Activated CD4-positive, alpha-beta memory T cell treated with anti-CD3 and anti-CD28 coated beads, Interleukin-2, amount 10 ng/mL, durations not matched to agents 7 days and 5 days (primary cell): ENCODE measurements at regions of chr11 and their contacts with region 1.

Region 1: DNA sequence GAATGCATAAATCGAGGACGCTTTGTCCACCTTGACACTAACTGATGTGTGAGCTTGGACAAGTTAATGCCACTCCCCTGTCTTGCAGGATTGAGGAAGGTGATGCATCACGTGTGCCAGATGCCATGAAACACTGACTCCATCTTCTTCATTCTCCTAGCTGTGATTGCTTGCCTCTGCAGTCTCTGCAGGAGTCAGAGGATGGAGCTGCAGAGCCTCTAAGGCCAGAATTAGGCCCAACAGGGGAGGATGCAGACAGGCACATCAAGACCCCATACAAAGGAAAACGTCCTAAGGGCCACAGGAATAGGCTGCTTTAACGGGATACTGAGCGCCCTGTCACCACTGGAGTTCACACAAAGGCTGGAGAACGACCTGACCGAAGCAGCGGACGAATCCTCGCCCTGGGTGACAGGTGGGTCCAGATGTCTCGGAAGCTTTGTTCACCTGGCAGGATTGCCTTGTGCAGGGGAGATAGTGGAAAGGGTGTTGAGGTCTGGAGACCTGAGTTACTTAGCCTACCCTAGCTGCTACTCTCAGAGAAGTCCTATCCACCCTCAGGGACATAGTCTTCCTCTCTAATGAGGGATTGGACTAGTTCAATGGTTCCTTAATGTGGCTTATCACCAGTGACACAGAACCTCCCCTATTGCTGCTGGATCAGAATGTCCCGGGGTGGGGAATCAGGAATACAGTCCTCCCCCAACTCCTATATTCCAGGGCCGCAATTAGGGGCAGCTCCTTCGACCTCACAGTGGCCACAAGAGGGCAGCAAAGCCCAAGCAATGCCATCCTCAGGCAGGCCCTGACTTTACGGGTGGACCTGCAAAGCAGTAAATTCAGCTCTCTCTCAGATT is 32.4 kb downstream of the DBX1 start:
- DNase-seq: peak; percentile 75
- H3K4me3 Mint-ChIP-seq: no peak overlapping the region
- H3K27ac Mint-ChIP-seq: no peak overlapping the region
- H3K4me1 Mint-ChIP-seq: peaks cover 11% of the 10 kb centered on the region
- H3K27me3 Mint-ChIP-seq: peaks cover 18% of the 10 kb centered on the region

Region 2: GRCh38 chr11:19951558-19952115 is 176.3 kb before region 1 on chr11:
- CTCF ChIA-PET with region 1: interaction called, 16 read pairs
- POLR2A ChIA-PET with region 1: no interaction called
- DNase-seq: no peak
- H3K4me3 Mint-ChIP-seq: peak overlapping the region; percentile 6
- H3K27ac Mint-ChIP-seq: no peak overlapping the region
- H3K4me1 Mint-ChIP-seq: peaks cover 8% of the 10 kb centered on the region
- H3K27me3 Mint-ChIP-seq: peaks cover 25% of the 10 kb centered on the region

Region 3: DNA sequence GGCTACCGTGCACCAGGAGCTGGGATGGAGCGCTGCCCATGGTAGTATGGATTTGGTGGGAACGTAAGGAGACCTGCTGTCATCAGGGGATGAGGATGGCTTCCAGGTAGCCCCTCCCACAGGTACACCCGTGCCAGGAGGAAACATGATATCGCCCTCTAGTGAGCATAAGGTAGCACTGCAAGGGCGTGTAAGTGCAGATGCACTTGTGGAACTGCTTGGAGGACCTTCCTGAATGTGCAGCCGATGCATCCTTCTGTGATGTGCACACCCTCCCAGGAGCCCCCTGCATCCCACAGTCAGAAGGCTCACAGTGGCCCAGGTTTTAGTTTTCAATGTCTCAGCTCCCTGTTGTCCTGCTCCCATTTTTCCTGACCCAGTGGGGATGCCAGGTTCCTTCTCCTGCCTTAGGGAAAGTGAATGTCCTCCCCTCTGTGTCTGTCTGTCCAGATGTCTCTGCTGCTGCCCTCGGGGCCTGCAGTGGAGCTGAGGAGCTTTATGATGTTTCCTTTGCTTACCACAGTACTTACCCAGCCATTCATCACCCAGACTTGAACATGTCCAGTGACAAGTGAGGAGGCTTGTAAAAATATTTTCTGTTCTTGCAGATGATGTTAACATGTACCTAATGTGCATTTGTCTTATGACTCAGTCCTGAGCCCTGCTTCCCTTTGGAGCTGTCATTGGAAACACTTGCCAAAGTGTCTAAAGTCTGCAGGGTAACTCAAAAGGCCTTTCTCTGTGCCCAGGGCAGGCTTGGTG is 16.8 kb before region 1 on chr11:
- CTCF ChIA-PET with region 1: interaction called, 16 read pairs
- POLR2A ChIA-PET with region 1: no interaction called
- DNase-seq: peak; percentile 54
- H3K4me3 Mint-ChIP-seq: no peak overlapping the region
- H3K27ac Mint-ChIP-seq: no peak overlapping the region
- H3K4me1 Mint-ChIP-seq: peaks cover 2% of the 10 kb centered on the region
- H3K27me3 Mint-ChIP-seq: no peaks in the 10 kb centered on the region

Region 4: GRCh38 chr11:20117291-20117690 is 10.6 kb before region 1 on chr11:
- CTCF ChIA-PET with region 1: interaction called, 16 read pairs
- POLR2A ChIA-PET with region 1: no interaction called
- DNase-seq: no peak
- H3K4me3 Mint-ChIP-seq: no peak overlapping the region
- H3K27ac Mint-ChIP-seq: no peak overlapping the region
- H3K4me1 Mint-ChIP-seq: no peaks in the 10 kb centered on the region
- H3K27me3 Mint-ChIP-seq: peaks cover 2% of the 10 kb centered on the region

Region 5: DNA sequence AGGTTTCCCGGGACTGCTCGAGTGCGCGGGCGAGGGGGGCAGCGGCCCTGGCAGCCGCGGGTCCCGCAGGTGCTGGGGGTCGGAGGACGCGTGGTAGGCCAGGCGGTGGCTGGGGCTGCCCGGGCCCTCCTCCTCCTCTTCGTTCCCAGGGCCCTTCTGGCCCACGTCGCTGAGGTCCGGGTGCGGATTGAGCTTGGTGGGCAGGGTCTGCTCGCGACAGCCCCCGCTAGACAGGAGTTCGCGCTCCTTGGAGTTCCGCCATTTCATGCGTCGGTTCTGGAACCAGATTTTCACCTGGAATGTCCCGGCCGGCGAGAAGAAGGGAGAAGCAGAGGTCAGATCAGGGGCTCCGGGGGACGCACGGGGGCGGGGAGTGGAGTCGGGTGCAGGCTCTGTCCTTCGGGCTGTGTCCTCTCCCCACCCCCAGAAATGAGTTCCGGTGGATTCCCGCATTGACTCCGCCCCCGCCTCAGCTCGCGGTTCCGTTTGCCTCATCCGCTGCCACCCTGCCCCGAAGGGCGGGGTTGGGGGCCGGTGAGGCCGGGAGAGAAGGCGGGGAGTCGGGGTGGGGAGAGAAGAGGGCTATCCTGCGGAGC is 28.5 kb after region 1 on chr11:
- CTCF ChIA-PET with region 1: interaction called, 11 read pairs
- POLR2A ChIA-PET with region 1: no interaction called
- DNase-seq: peak; percentile 47
- H3K4me3 Mint-ChIP-seq: peak overlapping the region; percentile 53
- H3K27ac Mint-ChIP-seq: no peak overlapping the region
- H3K4me1 Mint-ChIP-seq: peaks cover 22% of the 10 kb centered on the region
- H3K27me3 Mint-ChIP-seq: peaks cover 62% of the 10 kb centered on the region

Region 6: GRCh38 chr11:20355221-20356219 is 227.6 kb after region 1 on chr11:
- CTCF ChIA-PET with region 1: interaction called, 114 read pairs
- POLR2A ChIA-PET with region 1: no interaction called
- DNase-seq: peak; percentile 52
- H3K4me3 Mint-ChIP-seq: no peak overlapping the region
- H3K27ac Mint-ChIP-seq: no peak overlapping the region
- H3K4me1 Mint-ChIP-seq: peaks cover 5% of the 10 kb centered on the region
- H3K27me3 Mint-ChIP-seq: peaks cover 7% of the 10 kb centered on the region

Region 7: DNA sequence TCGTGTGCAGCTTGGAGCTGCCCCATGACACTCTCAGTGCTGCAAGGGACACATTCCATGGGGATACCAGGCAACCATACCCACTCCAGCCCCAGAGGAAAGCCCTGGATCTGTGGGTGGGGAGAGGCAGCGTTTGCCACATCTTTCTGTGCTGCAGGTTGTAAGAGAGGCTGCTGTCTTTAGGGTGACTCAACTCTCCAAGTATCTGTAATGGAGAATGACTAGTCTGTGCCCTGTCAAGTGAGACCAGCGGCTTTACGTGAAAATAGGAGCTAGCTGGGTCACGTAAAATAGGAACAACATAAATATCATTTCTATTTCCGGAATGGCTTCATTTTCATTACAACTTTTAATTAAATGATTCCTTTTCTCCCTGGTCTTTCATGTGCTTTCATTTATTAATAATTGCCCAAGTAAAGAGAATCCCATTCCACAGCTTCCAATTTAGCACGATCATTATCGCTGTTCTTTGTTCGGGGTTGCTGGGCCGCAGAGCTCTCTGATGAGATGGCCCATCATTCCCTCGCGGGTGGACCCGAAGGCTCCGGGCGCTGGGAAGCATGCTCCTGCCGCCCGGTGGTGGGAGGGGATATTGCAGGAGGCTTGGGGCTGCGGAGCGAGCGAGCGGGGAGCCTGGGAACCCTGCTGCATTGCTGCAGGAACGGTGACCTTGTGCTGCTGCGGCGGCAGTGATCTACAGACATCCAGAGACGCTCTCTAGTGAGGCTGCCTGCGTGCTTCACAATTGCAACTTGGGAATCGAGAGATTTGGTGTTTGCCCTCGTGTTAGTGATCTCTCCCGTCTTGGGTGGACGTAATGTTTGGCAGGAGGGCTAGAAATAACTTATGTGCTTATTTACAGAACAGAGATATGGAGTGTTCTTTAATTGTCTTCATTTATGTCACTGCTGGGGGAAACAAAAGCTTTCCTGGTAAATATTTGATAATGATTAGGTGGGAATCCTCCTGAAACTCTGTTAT is 482.1 kb after region 1 on chr11:
- CTCF ChIA-PET with region 1: interaction called, 15 read pairs
- POLR2A ChIA-PET with region 1: no interaction called
- DNase-seq: peak; percentile 62
- H3K4me3 Mint-ChIP-seq: peak overlapping the region; percentile 43
- H3K27ac Mint-ChIP-seq: no peak overlapping the region
- H3K4me1 Mint-ChIP-seq: peaks cover 6% of the 10 kb centered on the region
- H3K27me3 Mint-ChIP-seq: peaks cover 64% of the 10 kb centered on the region